Esophagus squamous epithelium (tissue), 5 donors: ENCODE measurements at regions of chr14 and their contacts with region 1.

Region 1: DNA sequence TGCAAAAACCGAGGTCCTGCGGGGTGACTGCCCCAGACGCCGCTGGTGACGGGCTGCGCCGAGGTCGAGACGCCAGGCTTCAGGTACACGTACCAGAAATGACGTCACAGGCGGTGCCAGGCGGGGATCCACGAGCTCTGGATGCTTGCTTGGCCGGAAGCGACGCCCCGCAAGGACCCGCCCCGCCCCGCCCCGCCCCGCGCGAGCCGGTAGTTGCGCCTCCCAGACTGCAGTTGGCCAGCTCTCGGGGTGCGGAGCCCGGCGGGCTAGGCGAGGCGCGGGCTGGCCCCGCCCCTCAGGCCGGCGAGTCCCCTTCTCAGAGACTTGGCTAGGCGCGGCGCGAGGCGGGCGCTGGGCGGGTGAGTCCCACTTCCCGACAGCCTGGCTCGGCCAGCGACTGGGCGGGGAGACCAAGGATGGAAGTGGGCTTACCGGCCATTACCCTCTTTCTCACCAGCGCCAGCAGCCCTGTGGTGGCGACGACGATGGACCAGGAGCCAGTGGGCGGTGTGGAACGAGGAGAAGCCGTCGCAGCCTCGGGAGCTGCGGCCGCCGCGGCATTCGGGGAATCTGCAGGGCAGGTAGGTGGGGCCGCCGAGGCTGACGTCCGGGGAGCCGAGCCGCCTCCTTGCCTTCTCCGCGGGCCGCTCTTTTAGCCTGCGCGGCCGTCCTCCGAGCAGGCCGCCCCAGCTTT is at the start of gene FAM177A1:
- DNase-seq: peak; percentile 85
- H3K4me3 ChIP-seq: peak within 1 kb of the TSS; percentile 86 to 94 (median 88)
- H3K27ac ChIP-seq: peak within 1 kb of the TSS; percentile 98 to 100 (median 99)
- H3K4me1 ChIP-seq: peaks cover 6 to 53% (median 16%) of the 10 kb centered on the region in 3 donors
- H3K27me3 ChIP-seq: no peaks in the 10 kb centered on the region
- CTCF ChIP-seq: peak in 1 of 6 experiments; percentile 9
- POLR2A ChIP-seq: peak in 3 of 4 donors; percentile 59 to 98 (median 93)
- total RNA-seq, gene FAM177A1: 25.9 to 35.9 (median 28.3) TPM

Region 2: GRCh38 chr14:34425095-34425851 is 620.9 kb before region 1 on chr14:
- intact Hi-C with region 1: no loop called
- DNase-seq: no peak
- H3K4me3 ChIP-seq: no peak overlapping the region
- H3K27ac ChIP-seq: peak overlapping the region in 1 of 4 donors; percentile 14
- H3K4me1 ChIP-seq: no peaks in the 10 kb centered on the region
- H3K27me3 ChIP-seq: no peaks in the 10 kb centered on the region
- CTCF ChIP-seq: no peak
- POLR2A ChIP-seq: no peak

Region 3: DNA sequence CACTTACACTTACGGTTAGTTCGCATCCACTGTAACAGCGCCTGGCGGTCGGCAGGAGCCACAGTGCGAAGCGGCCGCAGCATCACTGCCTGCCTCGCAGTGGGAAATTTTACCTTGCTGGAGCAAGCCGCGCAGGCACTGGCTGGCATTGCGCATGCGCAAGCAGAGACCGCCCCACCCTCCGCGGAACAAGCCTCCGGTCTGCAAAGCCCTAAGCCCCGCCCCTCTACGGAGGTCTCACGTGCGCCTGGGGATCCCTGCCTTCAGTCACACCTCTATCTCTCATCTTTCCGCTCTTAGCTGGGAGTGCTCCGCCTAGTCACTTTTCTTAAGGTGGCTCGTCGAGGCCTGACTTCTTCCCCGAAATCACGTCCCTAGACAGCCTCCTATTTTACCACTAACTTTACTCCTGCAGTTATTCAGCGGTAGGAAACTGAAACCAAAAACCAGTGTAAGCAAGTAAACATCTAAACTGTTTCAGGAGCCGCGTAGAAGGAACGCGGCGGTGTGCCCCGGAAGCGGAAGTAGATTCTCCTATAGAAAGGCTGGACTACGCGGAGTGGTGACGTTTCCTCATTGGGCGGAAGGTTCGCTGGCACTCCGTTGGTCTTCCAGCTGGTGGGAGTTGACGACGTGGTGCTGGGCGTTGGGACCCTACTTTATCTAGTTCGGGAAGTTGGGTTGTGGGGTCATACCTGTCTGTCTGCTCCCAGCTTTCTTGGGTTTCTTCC is 63.6 kb before region 1 on chr14 and contains the start of gene SRP54:
- intact Hi-C with region 1: loop called (anchors 5 kb)
- DNase-seq: peak; percentile 94
- H3K4me3 ChIP-seq: peak within 1 kb of the TSS; percentile 68 to 90 (median 84)
- H3K27ac ChIP-seq: peak within 1 kb of the TSS; percentile 93 to 97 (median 96)
- H3K4me1 ChIP-seq: peaks cover 4 to 60% (median 21%) of the 10 kb centered on the region in 3 donors
- H3K27me3 ChIP-seq: no peaks in the 10 kb centered on the region
- CTCF ChIP-seq: peak in 5 of 6 experiments; percentile 1 to 51 (median 38)
- POLR2A ChIP-seq: peak in 3 of 4 donors; percentile 87 to 96 (median 95)
- total RNA-seq, gene SRP54: 46.2 to 53.0 (median 49.6) TPM